Adrenal gland (tissue), 19 donors: ENCODE measurements at regions of chr10 and their contacts with region 1.

Region 1: DNA sequence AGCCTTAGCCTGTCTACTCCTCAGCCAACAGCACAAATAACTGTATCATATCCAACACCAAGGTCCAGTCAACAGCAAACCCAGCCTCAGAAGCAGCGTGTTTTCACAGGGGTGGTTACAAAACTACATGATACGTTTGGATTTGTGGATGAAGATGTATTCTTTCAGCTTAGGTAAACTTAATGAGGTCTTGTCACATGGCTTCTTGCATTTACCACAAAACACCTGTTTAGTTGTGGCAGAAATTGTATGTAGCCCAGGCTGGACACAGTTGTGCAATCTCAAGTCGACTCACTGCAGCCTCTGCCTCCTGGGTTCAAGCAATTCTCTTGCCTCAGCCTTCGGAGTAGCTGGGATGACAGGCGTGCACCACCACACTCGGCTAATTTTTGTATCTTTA is 21.4 kb downstream of the CCAR1 start:
- DNase-seq: no peak
- H3K4me3 ChIP-seq: no peak overlapping the region
- H3K27ac ChIP-seq: no peak overlapping the region
- H3K4me1 ChIP-seq: no peaks in the 10 kb centered on the region
- H3K27me3 ChIP-seq: no peaks in the 10 kb centered on the region
- CTCF ChIP-seq: no peak
- POLR2A ChIP-seq: no peak

Region 2: GRCh38 chr10:68684413-68684812 is 58.0 kb before region 1 on chr10:
- intact Hi-C with region 1: no loop called
- DNase-seq: no peak
- H3K4me3 ChIP-seq: no peak overlapping the region
- H3K27ac ChIP-seq: no peak overlapping the region
- H3K4me1 ChIP-seq: no peaks in the 10 kb centered on the region
- H3K27me3 ChIP-seq: no peaks in the 10 kb centered on the region
- CTCF ChIP-seq: no peak
- POLR2A ChIP-seq: no peak

Region 3: DNA sequence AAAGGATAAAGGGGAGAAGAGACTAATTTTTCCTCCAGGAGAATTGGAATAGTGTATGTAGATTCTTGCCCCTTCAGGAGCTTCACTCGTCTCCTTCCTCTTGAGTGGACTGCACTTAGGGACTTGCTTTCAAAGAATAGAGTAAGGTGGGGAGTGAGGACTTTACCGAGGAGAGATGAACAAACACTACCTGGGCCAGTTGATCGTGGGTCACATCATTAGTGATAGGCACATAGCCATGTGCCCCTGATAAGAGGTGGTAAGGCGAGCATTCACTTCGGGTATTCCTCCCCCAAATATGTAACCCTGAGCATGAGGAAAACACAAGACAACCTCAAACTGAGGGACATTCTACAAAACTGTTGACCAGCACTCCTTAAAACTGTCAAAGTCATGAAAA is 231.6 kb after region 1 on chr10:
- intact Hi-C with region 1: loop called in 1 of 2 experiments (anchors 10 kb)
- DNase-seq: no peak
- H3K4me3 ChIP-seq: no peak overlapping the region
- H3K27ac ChIP-seq: no peak overlapping the region
- H3K4me1 ChIP-seq: no peaks in the 10 kb centered on the region
- H3K27me3 ChIP-seq: no peaks in the 10 kb centered on the region
- CTCF ChIP-seq: no peak
- POLR2A ChIP-seq: no peak